Posterior cingulate gyrus (tissue), 11 donors: ENCODE measurements at regions of chr1 and their contacts with region 1.

Region 1: GRCh38 chr1:203267347-203267846 is 37.9 kb upstream of the BTG2 start:
- DNase-seq: peak in 9 of 10 donors; percentile 60 to 94 (median 81)

Region 2: DNA sequence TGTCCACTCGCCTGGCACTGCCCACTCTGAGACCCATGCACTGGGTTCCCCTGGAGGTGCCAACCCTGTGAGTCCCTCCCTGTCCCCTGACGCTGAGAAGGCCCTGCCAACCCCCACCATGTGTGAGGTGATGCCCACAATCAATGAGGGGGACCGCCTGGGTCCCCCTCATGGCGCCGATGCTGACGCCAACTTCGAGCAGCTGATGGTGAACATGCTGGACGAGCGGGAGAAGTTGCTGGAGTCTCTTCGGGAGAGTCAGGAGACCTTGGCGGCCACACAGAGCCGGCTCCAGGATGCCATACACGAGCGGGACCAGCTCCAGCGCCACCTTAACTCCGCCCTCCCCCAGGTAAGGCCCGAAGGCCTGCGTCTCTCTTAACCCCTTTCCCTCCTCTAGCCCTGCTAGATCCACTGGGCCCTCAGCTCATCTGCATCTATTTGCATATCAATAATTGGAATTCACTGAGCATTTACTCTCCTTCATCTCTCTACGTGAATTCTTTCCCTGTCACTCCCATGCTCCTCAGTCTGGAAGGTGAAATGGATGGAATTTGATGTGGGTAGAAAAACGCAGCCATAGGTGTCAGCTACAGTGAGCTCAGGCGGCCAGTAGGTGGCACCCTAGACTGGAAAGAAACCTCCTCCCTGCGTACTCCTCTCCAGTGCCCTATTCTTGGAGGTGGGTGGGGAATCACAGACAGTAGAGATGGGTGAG is 228.3 kb before region 1 on chr1:
- intact Hi-C with region 1: loop called (anchors 5 kb)
- DNase-seq: peak; percentile 62 to 96 (median 82)

Region 3: DNA sequence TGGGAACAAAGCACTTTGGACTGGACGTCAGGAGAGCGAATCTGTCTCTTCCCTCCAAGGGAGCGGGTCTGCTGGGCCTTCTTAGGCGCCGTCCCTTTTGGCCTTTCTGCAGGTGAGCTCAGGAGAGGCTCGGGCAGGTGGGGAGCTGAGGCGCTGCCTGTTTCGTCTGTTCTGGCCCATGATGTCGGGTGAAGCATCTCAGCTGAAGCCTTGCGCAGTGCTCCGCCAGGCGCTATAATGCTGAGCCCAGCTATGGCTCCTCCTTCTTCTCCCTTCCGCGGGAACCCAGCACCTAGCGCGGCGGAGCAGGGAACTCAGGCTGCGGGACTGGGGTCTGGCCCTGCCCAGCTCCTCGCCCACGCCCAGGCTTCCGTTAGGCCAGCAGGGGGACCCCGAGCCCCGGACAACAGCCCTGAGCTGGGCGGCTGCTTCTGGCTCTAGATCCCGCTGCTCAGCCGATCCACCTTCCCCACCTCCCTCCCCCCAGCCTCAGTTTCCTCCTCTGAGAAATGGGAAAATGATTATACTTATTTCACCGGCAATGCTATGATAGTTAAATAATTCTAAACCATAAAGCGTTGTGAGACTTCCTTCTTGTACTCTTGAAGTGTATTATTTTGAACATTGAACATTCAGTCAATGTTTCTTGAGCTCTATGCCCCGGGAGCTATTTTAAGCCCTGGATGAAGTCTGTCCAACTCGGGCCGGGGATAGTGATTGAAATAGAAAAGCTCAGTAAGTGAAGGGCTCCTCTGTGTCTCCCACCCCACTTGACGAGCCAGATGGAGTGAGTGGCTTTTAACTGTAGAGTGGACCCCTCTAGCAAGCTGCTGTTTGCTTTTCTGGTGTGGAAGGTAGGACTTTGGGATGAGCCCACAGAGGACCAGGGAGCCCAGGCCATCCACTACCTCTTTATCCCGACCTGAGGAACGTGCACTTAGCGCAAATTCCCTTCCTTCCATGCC is 149.5 kb before region 1 on chr1:
- intact Hi-C with region 1: loop called (anchors 5 kb)
- DNase-seq: peak; percentile 66 to 97 (median 81)

Region 4: GRCh38 chr1:204350857-204351573 is 1083.6 kb after region 1 on chr1:
- intact Hi-C with region 1: no loop called
- DNase-seq: peak; percentile 85 to 99 (median 94)